ENCODE measurements at regions of chr1 and their contacts with region 1.

Region 1: GRCh38 chr1:160474392-160475242 is 48.4 kb downstream of the SLAMF6 start:
- DNase-seq: peak; percentile 49
- H3K4me3 Mint-ChIP-seq: no peak overlapping the region
- H3K27ac Mint-ChIP-seq: no peak overlapping the region
- H3K4me1 Mint-ChIP-seq: no peaks in the 10 kb centered on the region
- H3K27me3 Mint-ChIP-seq: no peaks in the 10 kb centered on the region

Region 2: DNA sequence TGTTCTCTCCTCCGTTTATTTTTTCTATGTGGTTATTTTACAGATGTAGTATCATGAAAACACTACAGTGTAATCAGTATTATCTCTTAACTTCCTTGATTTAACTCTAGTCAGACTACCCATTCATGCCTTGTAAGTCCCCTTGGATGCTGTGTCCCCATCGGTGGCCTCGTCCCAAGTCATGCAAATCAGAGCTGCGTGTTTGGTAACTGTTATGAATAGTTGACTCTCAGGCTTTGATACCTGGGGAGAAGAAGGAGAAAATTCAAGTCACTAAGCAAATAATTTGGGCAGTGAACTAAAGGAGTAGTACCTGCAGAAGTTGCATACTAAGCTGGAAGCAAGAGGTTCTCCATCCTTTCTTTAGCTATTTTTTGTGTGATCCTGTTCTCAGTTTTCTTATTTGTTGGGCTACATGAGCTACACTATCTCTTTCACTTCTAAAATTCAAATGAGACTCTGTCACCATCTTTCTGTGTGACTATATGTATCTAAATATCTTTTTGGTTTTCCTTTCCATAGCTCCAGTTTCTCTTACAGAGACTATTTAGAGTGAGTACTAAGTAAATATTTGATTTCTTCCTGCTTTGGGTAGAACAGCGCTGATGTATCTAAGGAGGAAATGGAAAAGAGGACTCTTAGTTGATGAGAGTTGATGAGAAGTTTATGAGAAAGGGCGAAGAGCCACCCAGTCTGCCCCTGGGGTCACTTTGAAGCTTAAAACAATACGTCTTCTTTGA is 23.3 kb before region 1 on chr1:
- CTCF ChIA-PET with region 1: interaction called, 26 read pairs
- intact Hi-C with region 1: loop called (anchors 1 kb)
- DNase-seq: no peak
- H3K4me3 Mint-ChIP-seq: peak overlapping the region; percentile 56
- H3K27ac Mint-ChIP-seq: peak overlapping the region; percentile 93
- H3K4me1 Mint-ChIP-seq: peaks cover 76% of the 10 kb centered on the region
- H3K27me3 Mint-ChIP-seq: no peaks in the 10 kb centered on the region

Region 3: DNA sequence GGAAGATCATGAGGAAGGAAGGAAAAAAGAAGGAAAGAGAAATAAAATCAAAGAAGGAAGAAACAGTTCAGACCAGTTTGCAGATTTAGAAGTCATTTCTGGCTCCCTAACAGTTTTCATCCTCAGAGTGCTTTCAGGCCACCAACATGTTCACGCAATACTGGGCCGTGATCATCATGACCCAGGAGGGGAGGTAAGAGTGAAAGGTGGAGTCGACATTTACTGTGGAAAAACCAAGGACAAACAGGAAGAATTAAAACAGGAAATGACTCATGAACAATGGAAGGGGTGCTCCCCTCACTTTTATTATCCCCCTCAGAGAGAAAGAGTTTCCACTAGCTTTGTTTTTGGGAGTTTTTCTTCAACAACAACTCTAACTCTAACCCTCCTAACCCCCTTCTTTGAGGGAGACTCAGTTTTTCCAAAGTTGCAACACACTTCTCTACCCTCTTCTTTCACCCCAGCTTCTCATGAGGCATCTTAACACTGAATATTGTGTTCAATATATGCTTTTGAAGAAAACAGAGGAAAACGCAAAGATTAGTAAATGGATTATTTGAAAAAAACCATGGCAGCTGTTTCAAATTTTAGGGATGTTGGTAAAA is 13.8 kb before region 1 on chr1:
- CTCF ChIA-PET with region 1: interaction called, 6 read pairs
- intact Hi-C with region 1: loop called (anchors 1 kb)
- DNase-seq: peak; percentile 66
- H3K4me3 Mint-ChIP-seq: peak overlapping the region; percentile 68
- H3K27ac Mint-ChIP-seq: peak overlapping the region; percentile 99
- H3K4me1 Mint-ChIP-seq: peaks cover 91% of the 10 kb centered on the region
- H3K27me3 Mint-ChIP-seq: no peaks in the 10 kb centered on the region

Region 4: DNA sequence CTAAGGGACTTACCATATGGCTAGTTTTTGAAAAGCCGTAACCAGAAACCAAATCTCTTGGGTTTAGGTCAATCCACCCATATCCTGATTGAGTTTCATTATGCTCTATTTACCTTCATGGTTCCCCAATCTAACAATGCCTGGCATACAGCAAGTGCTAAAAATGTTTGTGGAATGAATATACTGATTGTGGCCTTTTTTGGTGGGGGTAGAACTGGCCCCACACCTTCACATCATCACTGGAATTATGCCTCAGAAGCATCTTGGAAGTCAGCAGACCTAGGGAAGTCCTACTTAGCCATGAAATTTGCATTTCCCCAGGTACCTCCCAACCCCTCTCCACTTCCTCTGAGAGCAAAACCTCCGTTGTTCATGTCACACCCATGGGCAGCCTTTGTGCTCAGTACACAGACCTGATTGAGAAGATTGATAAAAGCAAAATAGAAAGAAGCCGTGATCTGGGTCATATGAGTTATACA is 190.0 kb after region 1 on chr1:
- CTCF ChIA-PET with region 1: no interaction called
- intact Hi-C with region 1: loop called (anchors 2 kb)
- DNase-seq: peak; percentile 77
- H3K4me3 Mint-ChIP-seq: peak overlapping the region; percentile 54
- H3K27ac Mint-ChIP-seq: peak overlapping the region; percentile 93
- H3K4me1 Mint-ChIP-seq: peaks cover 72% of the 10 kb centered on the region
- H3K27me3 Mint-ChIP-seq: no peaks in the 10 kb centered on the region